HepG2 (cell line): ENCODE measurements at regions of chr2 and their contacts with region 1.

Region 1: GRCh38 chr2:204503869-204504268 is 41.4 kb upstream of the PARD3B start:
- DNase-seq: no peak
- ATAC-seq: no peak
- H3K4me3 ChIP-seq: no peak overlapping the region
- H3K27ac ChIP-seq: no peak overlapping the region
- H3K4me1 ChIP-seq: peaks cover 16% of the 10 kb centered on the region
- H3K27me3 ChIP-seq: no peaks in the 10 kb centered on the region
- CTCF ChIP-seq: no peak
- EP300 ChIP-seq: no peak
- POLR2A ChIP-seq: no peak
- RAD21 ChIP-seq: no peak

Region 2: GRCh38 chr2:204468746-204469429 is 35.0 kb before region 1 on chr2:
- CTCF ChIA-PET with region 1: no interaction called
- POLR2A ChIA-PET with region 1: no interaction called
- in situ Hi-C with region 1: no loop called
- intact Hi-C with region 1: loop called (anchors 1 kb)
- DNase-seq: no peak
- ATAC-seq: no peak
- H3K4me3 ChIP-seq: no peak overlapping the region
- H3K27ac ChIP-seq: no peak overlapping the region
- H3K4me1 ChIP-seq: no peaks in the 10 kb centered on the region
- H3K27me3 ChIP-seq: no peaks in the 10 kb centered on the region
- CTCF ChIP-seq: no peak
- EP300 ChIP-seq: no peak
- POLR2A ChIP-seq: no peak
- RAD21 ChIP-seq: no peak

Region 3: DNA sequence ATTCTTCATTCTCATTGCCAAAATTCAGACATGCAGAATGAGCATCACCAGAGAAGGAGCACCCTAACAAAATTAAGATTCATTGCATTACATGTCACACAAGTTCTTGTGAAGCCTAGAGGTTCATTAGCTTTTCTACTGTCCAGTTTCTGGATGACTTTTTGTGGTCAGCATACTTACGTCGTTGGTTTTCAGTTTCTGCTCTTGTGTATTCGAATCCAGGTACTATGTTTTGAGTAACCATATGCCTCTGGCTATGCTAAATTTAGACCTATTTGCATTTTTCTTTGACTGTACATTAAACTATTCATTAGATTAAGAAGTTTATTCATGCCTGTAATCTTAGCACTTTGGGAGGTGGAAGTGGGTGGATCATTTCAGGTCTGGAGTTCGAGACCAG is 292.7 kb after region 1 on chr2:
- CTCF ChIA-PET with region 1: no interaction called
- POLR2A ChIA-PET with region 1: no interaction called
- in situ Hi-C with region 1: no loop called
- intact Hi-C with region 1: no loop called
- DNase-seq: no peak
- ATAC-seq: no peak
- H3K4me3 ChIP-seq: no peak overlapping the region
- H3K27ac ChIP-seq: no peak overlapping the region
- H3K4me1 ChIP-seq: no peaks in the 10 kb centered on the region
- H3K27me3 ChIP-seq: no peaks in the 10 kb centered on the region
- CTCF ChIP-seq: no peak
- EP300 ChIP-seq: no peak
- POLR2A ChIP-seq: no peak
- RAD21 ChIP-seq: no peak